AG04450 (cell line): ENCODE measurements at regions of chr7 and their contacts with region 1.

Region 1: DNA sequence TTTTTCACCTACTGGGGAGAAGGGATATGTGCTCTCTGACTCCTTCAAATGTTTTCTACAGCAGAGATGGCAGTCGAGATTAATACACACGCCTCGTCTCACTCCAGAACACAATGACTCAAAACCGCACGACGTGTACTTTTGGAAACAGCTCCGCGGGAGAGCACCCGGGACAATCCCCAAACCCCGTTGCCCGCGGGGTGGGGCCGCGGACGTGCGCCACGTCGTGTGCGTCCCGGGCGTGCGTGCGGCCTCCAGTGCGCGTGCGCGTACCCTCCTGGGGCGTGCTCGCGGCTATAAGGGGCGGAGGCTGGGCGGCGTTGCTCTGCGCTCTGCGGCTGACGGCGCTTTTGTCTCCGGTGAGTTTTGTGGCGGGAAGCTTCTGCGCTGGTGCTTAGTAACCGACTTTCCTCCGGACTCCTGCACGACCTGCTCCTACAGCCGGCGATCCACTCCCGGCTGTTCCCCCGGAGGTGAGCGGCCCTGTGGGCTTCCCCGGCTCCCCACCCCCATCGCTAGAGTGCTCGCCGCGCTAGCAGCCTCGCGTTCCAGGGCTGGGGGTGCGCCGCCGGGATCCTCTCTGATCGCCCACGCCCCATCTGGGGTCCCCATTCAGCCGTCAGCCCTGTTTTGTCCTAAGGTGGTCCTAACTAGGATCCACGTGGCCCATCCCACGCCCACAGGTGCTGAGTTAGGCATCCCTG is at the start of gene HILPDA:
- DNase-seq: peak; percentile 80
- H3K4me3 ChIP-seq: peak within 1 kb of the TSS; percentile 100
- H3K27ac ChIP-seq: peak within 1 kb of the TSS; percentile 97
- H3K27me3 ChIP-seq: peaks cover 4% of the 10 kb centered on the region
- CTCF ChIP-seq: peak; percentile 27; the same call in 1 of the 2 replicates
- polyA plus RNA-seq, gene HILPDA: 15.9 and 17.8 TPM in 2 replicates

Region 2: GRCh38 chr7:128031901-128032604 is 423.6 kb before region 1 on chr7:
- CTCF ChIA-PET with region 1: no interaction called
- POLR2A ChIA-PET with region 1: no interaction called
- DNase-seq: peak; percentile 77
- H3K4me3 ChIP-seq: peak overlapping the region; percentile 54
- H3K27ac ChIP-seq: no peak overlapping the region
- H3K27me3 ChIP-seq: no peaks in the 10 kb centered on the region
- CTCF ChIP-seq: peak; percentile 40

Region 3: GRCh38 chr7:128415217-128415785 is 40.4 kb before region 1 on chr7:
- CTCF ChIA-PET with region 1: interaction called, 25 read pairs
- POLR2A ChIA-PET with region 1: interaction called, 3 read pairs
- DNase-seq: no peak
- H3K4me3 ChIP-seq: no peak overlapping the region
- H3K27ac ChIP-seq: no peak overlapping the region
- H3K27me3 ChIP-seq: peaks cover 23% of the 10 kb centered on the region
- CTCF ChIP-seq: no peak

Region 4: DNA sequence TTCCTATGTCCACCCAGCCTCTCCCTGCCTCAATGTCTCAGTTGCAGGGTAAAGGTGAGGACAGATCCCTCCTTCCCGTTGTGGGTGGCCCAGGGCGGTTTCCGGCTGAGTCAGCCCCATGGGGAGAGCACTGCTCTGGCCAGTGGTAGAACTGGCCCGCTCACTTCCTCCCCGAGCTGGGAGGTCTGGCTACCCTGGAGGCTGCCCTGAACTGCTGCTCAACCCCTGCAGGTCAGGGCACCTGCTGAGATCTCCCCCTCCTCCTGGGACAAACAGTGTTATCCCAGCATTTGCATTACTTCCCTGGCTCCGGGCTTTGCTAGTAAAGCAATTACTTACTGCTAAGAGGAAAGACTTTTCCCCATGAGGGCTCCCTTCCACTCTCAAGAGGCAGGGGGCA is 24.5 kb before region 1 on chr7:
- CTCF ChIA-PET with region 1: interaction called, 330 read pairs
- POLR2A ChIA-PET with region 1: interaction called, 8 read pairs
- DNase-seq: no peak
- H3K4me3 ChIP-seq: no peak overlapping the region
- H3K27ac ChIP-seq: no peak overlapping the region
- H3K27me3 ChIP-seq: peaks cover 16% of the 10 kb centered on the region
- CTCF ChIP-seq: no peak